Mammary epithelial cell (primary cell): ENCODE measurements at regions of chr4 and their contacts with region 1.

Region 1: GRCh38 chr4:143700416-143701352 is at the start of gene FREM3:
- DNase-seq: peak; percentile 10
- H3K4me3 ChIP-seq: no peak within 1 kb of the TSS
- H3K27ac ChIP-seq: no peak within 1 kb of the TSS
- H3K4me1 ChIP-seq: peaks cover 5% of the 10 kb centered on the region
- H3K27me3 ChIP-seq: peaks cover 37% of the 10 kb centered on the region
- CTCF ChIP-seq: no peak
- total RNA-seq, gene FREM3: not detected

Region 2: DNA sequence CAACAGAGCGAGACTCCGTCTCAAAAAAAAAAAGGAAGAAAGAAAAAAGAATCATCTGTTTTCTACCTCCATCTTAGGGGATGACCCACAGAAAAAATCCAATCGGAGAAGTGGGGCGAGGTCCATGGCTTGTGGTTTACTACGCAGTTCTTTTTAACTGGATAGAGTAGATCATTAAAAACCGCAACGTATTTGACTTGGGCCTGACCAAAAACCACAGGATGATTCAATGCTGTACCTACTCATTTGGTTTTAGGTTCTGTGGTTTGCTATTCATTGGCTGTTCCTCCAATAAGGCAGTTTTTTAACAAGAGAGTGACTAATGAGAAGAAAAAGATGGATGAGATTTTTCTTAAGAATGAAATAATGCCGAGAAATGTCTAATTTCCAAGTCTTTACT is 83.9 kb before region 1 on chr4:
- CTCF ChIA-PET with region 1: no interaction called
- dilution Hi-C with region 1: no loop called
- in situ Hi-C with region 1: no loop called
- intact Hi-C with region 1: loop called (anchors 10 kb)
- DNase-seq: peak; percentile 84
- H3K4me3 ChIP-seq: no peak overlapping the region
- H3K27ac ChIP-seq: no peak overlapping the region
- H3K4me1 ChIP-seq: no peaks in the 10 kb centered on the region
- H3K27me3 ChIP-seq: peaks cover 39% of the 10 kb centered on the region
- CTCF ChIP-seq: no peak

Region 3: DNA sequence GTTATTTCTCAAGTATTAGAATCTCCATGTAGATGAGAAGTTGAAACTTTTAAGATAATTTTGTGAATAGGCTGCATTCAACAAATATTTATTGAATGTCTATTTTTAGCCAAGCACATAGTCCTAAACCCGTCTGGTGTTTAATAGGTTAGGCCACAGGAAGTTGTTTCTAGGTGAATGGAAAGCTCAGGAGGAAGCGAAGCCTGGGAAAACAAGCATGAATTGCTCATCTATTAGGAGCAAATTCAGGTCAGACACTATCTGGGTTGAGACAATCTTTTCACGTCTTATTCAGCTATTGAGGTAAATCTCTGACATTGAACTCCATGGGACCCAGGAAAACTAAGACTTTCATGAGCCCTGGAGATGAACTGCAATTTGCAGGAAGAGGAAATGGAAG is 42.9 kb after region 1 on chr4:
- CTCF ChIA-PET with region 1: no interaction called
- dilution Hi-C with region 1: no loop called
- in situ Hi-C with region 1: no loop called
- intact Hi-C with region 1: no loop called
- DNase-seq: no peak
- H3K4me3 ChIP-seq: no peak overlapping the region
- H3K27ac ChIP-seq: no peak overlapping the region
- H3K4me1 ChIP-seq: no peaks in the 10 kb centered on the region
- H3K27me3 ChIP-seq: peaks cover 2% of the 10 kb centered on the region
- CTCF ChIP-seq: no peak

Region 4: GRCh38 chr4:143768007-143768591 is 67.4 kb after region 1 on chr4:
- CTCF ChIA-PET with region 1: no interaction called
- dilution Hi-C with region 1: no loop called
- in situ Hi-C with region 1: no loop called
- intact Hi-C with region 1: no loop called
- DNase-seq: peak; percentile 2
- H3K4me3 ChIP-seq: no peak overlapping the region
- H3K27ac ChIP-seq: no peak overlapping the region
- H3K4me1 ChIP-seq: no peaks in the 10 kb centered on the region
- H3K27me3 ChIP-seq: peaks cover 6% of the 10 kb centered on the region
- CTCF ChIP-seq: no peak